ENCODE measurements at regions of chr1 and their contacts with region 1.

Region 1: DNA sequence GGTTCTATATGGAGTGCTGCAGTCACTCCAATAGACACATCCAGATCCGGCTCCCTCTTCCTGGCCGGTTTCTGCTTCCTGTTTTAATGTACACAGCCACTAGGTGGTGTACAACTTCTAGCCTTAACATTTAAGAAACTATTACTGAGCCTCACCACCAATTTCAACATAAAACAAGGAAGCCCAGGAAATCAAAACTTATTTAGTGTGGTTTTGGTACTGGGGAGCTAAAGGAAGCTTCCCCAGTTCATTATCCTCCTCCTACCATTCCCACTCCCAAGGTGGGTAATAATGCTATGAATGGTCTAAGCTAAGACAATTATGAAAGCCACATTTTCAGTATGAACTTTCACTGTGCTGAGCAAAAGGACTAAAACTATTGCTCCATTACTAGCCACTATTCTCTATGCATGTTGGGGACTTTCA is 25.5 kb upstream of the MTMR11 start:
- H3K4me3 Mint-ChIP-seq: no peak overlapping the region
- H3K27ac Mint-ChIP-seq: no peak overlapping the region
- H3K4me1 Mint-ChIP-seq: peaks cover 8% of the 10 kb centered on the region
- H3K27me3 Mint-ChIP-seq: peaks cover 68% of the 10 kb centered on the region

Region 2: GRCh38 chr1:149844101-149844500 is 118.0 kb before region 1 on chr1:
- intact Hi-C with region 1: no loop called
- H3K4me3 Mint-ChIP-seq: peak overlapping the region; percentile 70
- H3K27ac Mint-ChIP-seq: peak overlapping the region; percentile 79
- H3K4me1 Mint-ChIP-seq: peaks cover 48% of the 10 kb centered on the region
- H3K27me3 Mint-ChIP-seq: no peaks in the 10 kb centered on the region

Region 3: DNA sequence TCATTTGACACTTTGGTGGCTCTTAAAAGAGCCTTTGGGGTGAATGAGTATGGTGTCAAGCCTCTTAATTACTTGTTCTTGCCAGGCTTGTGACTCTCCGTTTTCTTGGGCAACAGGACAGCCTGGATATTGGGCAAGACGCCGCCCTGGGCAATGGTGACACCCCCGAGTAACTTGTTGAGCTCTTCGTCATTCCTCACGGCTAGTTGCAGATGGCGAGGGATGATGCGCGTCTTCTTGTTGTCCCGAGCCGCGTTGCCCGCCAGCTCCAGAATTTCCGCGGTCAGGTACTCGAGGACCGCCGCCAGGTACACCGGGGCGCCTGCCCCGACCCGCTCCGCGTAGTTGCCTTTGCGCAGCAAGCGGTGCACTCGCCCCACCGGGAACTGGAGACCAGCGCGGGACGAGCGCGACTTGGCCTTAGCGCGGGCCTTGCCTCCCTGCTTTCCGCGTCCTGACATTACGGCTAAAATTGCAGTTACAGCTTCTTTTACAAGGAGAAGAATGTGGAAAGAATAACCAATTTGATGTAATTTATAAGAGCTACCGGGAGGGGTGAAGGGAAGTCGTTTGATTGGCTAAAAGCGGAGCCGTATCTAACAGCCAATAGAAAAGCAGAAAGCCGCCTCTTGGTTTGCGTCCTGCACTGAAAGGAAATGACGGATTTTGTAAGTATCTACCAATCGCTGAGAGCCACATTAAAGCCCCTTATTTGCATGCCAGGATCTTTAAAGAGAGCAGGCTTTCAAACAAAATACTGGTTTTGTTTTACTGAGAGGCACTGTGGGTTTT is 74.5 kb before region 1 on chr1:
- intact Hi-C with region 1: loop called (anchors 2 kb)
- H3K4me3 Mint-ChIP-seq: no peak overlapping the region
- H3K27ac Mint-ChIP-seq: no peak overlapping the region
- H3K4me1 Mint-ChIP-seq: peaks cover 16% of the 10 kb centered on the region
- H3K27me3 Mint-ChIP-seq: no peaks in the 10 kb centered on the region

Region 4: DNA sequence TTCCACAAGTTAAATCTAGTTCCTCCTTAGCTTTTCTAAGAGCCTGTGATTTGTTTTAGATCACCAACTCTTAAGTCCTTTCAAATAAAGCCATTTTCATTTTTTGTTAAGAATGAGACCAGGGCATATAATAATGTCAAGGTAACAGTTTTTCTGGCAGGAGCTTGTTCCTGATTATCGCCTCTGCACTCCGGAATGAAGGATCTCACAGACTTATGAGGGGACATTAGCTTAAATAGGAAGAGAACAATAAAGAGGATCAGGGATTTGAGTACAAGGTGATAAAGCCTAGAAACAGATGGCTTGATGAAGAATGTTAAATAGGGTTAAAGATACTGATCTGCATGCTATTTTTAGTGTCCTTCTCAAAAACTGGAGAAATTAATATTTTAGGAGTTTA is 62.0 kb after region 1 on chr1:
- intact Hi-C with region 1: no loop called
- H3K4me3 Mint-ChIP-seq: no peak overlapping the region
- H3K27ac Mint-ChIP-seq: no peak overlapping the region
- H3K4me1 Mint-ChIP-seq: no peaks in the 10 kb centered on the region
- H3K27me3 Mint-ChIP-seq: peaks cover 77% of the 10 kb centered on the region

Region 5: GRCh38 chr1:150049926-150050325 is 87.8 kb after region 1 on chr1:
- intact Hi-C with region 1: loop called (anchors 1 kb)
- H3K4me3 Mint-ChIP-seq: no peak overlapping the region
- H3K27ac Mint-ChIP-seq: no peak overlapping the region
- H3K4me1 Mint-ChIP-seq: peaks cover 22% of the 10 kb centered on the region
- H3K27me3 Mint-ChIP-seq: peaks cover 37% of the 10 kb centered on the region

Region 6: GRCh38 chr1:150141452-150141851 is 179.3 kb after region 1 on chr1:
- intact Hi-C with region 1: no loop called
- H3K4me3 Mint-ChIP-seq: no peak overlapping the region
- H3K27ac Mint-ChIP-seq: no peak overlapping the region
- H3K4me1 Mint-ChIP-seq: peaks cover 26% of the 10 kb centered on the region
- H3K27me3 Mint-ChIP-seq: no peaks in the 10 kb centered on the region

Region 7: GRCh38 chr1:150186789-150187559 is 224.8 kb after region 1 on chr1:
- intact Hi-C with region 1: loop called (anchors 2 kb)
- H3K4me3 Mint-ChIP-seq: peak overlapping the region; percentile 59
- H3K27ac Mint-ChIP-seq: peak overlapping the region; percentile 92
- H3K4me1 Mint-ChIP-seq: peaks cover 41% of the 10 kb centered on the region
- H3K27me3 Mint-ChIP-seq: no peaks in the 10 kb centered on the region

Measured in dendritic cell treated with granulocyte-macrophage colony-stimulating factor and Interleukin-4, amounts not matched to agents 40 ng/mL and 50 ng/mL, for 4 days (primary cell).